HEK293 (cell line): ENCODE measurements at regions of chr2 and their contacts with region 1.

Region 1: DNA sequence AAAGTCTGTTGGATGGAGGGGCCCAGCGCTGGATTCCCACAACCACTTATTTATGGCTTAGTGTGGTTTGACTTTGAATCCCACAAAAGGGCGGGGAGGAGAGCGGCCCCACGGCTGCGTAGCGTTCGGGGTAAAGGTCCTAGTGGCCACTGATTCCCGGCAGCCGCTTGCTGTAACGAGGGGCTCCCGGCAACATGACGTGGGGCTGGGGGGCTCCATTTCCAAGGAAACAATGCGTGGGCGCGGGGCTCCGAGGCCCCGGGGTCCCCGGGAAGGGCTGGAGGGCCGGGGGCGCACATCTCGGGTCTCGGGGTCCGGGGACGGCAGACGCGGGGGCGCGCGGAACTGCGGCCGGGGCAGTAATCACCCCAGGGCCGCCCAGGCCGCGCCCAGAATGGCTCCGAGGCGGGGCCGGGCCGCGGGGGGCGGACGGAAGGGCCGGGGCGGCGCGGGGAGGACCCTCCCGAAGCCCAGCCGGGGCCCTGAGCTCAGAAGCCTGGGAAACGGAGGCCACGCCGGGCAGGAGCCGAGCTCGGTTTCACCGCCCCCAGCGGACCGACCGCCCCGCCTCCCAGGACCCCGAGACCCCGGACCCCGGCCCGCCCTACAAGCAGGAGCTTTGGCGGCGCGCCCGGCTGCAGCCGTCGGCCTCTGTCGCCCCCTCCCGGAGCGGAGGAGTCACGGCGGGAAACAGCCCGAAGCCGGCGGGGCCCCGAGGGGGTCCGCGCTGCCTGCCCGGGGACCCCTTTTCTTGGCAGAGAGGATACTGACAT is 11.9 kb upstream of the MLPH start:
- H3K4me3 ChIP-seq: peak overlapping the region; percentile 65
- H3K27ac ChIP-seq: peak overlapping the region; percentile 79
- H3K4me1 ChIP-seq: no peaks in the 10 kb centered on the region
- CTCF ChIP-seq: peak; percentile 81

Region 2: DNA sequence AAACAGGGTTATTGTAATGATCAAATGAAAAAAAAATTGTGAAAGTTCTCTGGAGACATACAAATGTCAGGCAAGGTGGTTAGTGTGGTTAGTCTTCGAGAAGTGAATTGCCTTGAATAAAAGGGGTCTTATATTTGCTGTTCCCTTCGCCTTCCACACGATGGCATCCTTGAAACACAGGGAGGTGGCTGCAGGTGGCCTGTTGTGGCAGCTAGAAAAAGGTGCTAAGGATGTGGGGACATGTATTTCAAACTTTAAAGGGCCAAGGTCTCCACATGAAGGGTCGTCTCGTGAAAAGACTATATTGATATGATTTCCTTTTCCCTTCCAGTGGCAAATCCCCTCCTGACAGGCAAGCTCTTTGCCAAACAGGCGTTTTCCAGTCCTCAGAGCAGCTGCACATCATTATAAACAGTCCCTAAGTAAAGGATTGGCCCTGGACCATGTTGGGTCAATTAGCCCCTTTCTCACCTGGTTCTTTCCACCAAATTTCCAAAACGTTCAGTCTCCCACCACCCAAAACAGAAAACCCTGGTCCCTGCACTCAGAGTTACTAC is 321.0 kb before region 1 on chr2:
- CTCF ChIA-PET with region 1: interaction called, 16 read pairs
- POLR2A ChIA-PET with region 1: no interaction called
- H3K4me3 ChIP-seq: no peak overlapping the region
- H3K27ac ChIP-seq: no peak overlapping the region
- H3K4me1 ChIP-seq: no peaks in the 10 kb centered on the region
- CTCF ChIP-seq: peak; percentile 43; the same call in 1 of the 2 replicates

Region 3: GRCh38 chr2:237434866-237435311 is 40.2 kb before region 1 on chr2:
- CTCF ChIA-PET with region 1: no interaction called
- POLR2A ChIA-PET with region 1: no interaction called
- H3K4me3 ChIP-seq: no peak overlapping the region
- H3K27ac ChIP-seq: no peak overlapping the region
- H3K4me1 ChIP-seq: no peaks in the 10 kb centered on the region
- CTCF ChIP-seq: no peak